ENCODE measurements at regions of chr3 and their contacts with region 1.

Region 1: DNA sequence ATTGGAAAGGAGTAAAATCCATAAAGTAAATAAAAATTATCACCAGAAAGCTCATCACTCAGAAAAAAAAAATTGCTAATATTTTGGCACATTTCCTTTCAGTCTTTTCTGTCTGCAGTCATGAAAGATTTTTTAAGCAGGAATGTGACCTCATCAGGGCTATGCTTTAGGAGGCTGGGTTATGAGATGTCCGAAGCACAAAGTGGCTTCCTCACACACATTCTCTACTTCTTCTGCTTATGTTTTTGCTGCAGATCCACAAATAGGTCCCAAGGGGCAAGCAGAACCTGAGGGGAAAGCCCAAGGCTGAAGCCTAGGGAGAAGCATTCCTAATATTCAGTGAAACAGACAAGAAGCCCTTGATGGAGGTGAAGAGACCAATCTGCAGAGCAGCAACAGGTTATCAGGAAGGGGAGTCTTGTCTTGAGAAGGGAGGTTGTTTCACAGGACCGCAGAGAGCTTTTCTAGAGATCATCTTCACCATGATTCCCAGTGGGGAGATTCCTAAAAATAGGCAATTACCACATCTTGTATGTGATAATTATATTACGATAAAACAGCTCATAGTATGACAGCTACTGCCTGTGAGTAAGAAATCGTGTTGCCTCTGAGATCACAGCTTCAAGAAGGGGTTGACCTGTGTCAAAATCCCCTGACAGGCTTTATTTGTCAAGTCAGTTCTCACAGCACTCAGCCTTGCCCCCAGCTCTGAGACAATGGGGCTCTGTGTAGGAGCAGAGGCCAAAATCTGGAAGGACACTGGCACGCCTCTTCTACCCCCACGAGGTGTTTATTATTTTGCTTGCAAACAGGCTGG is 60.5 kb downstream of the IGF2BP2 start:
- DNase-seq: no peak
- ATAC-seq: no peak
- H3K4me3 Mint-ChIP-seq: no peak overlapping the region
- H3K27ac Mint-ChIP-seq: no peak overlapping the region
- H3K4me1 Mint-ChIP-seq: no peaks in the 10 kb centered on the region
- H3K27me3 Mint-ChIP-seq: peaks cover 20% of the 10 kb centered on the region

Region 2: DNA sequence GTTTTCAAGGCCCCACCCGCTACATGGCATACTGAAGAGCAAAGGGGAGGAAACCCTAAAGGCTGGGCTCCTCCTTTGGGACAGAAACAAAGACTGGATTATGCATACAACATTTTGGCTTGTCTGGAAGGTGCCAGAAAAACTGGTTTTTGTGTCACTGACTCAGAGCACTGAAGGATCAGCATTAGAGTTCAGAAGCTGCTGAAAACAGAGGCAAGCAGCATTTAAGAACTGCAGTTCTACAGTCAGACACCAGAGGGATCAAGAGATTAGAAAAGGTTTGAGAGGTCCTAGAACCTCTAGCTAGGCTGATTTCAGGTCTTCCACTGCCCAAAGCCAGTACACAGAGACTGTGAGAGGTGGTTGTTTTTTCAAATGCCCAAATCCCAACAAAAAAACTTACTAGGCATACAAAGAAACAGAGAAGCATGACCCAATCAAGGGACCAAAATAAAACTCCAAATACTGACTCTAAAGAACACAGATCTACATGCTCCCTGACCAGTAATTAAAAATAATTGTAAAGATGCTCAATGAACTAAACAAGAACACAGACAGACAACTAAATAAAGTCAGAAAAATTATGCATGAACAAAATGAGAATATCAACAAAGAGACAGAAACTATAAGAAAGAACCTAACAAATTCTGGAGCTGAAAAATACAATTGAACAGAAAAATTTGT is 87.1 kb before region 1 on chr3:
- CTCF ChIA-PET with region 1: interaction called, 19 read pairs
- POLR2A ChIA-PET with region 1: no interaction called
- intact Hi-C with region 1: loop called (anchors 1 kb)
- DNase-seq: no peak
- ATAC-seq: no peak
- H3K4me3 Mint-ChIP-seq: no peak overlapping the region
- H3K27ac Mint-ChIP-seq: no peak overlapping the region
- H3K4me1 Mint-ChIP-seq: no peaks in the 10 kb centered on the region
- H3K27me3 Mint-ChIP-seq: peaks cover 23% of the 10 kb centered on the region

Region 3: DNA sequence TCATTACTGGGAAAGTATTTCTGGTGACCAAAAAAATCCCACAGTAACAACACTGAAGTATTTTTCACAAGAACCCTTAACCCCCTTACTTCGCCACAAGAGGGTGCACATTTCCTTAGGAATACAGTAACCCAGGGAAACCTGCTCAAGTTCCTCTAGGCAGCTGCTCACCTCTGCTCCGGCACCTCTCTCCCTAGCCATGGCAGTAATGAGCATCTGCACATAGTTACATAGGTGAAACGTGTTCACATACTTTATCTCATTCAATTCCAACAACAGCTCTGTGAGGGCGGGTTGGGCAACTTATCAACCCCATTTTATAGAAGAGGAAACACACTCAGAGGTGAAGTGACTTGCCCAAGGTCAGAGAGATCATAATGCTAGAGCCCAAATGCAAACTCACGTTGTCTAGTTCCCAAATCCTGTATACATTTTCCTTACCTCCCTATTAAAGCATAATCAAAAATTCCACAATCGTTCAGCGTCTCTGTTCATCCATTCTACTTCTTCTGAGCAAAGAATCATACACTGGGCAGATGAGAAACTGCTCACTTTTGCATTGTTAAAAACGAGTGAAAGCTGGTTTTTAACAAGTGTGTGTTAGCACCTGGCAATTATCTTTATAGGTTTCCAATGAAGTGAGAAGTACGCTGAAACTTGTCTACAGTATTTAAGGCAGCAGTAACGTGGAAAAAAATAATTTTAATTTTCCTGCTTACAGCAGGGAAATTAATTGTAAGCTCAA is 30.2 kb before region 1 on chr3:
- CTCF ChIA-PET with region 1: interaction called, 28 read pairs
- POLR2A ChIA-PET with region 1: no interaction called
- intact Hi-C with region 1: no loop called
- DNase-seq: peak; percentile 37
- ATAC-seq: no peak
- H3K4me3 Mint-ChIP-seq: no peak overlapping the region
- H3K27ac Mint-ChIP-seq: no peak overlapping the region
- H3K4me1 Mint-ChIP-seq: no peaks in the 10 kb centered on the region
- H3K27me3 Mint-ChIP-seq: peaks cover 10% of the 10 kb centered on the region

Region 4: DNA sequence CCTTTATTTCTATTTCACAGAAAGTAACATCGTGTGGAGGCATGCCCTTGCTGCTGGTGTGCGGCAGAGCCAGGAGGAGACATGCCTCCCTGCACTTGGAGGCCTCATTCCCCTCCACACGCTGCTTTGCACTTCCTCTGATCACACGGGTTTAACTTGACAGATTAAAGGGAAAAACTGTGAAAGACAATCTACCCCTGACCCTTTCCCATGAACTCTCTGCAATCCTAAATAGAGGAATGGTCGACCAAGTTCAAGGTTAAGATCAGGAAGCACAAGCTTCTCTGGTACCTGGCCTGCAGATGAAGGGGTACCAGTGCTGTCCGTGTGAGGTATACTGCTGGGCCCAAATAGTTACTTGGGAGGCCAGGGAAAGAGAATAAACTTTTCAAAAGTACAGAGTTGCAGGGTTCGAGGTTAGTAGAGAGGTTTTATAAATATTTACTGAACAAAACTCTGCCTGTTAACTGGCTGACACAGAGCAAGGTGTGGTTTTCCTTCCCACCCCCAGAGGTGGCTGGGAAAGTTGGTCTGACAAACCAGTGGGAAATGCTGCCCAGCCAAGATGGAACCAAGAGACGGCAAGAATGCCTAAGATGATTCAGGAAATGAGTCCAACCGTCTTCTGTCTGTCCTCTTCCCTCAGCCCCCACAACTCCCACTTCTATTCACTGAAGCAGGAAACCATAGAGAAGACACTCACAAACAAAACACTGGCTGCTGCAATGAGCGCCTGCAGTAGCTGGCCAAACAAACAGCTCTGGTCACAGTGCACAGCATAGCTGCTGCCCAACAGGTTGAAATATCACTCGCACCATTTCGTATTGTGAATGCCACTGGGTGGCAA is 19.2 kb before region 1 on chr3:
- CTCF ChIA-PET with region 1: interaction called, 12 read pairs
- POLR2A ChIA-PET with region 1: no interaction called
- intact Hi-C with region 1: no loop called
- DNase-seq: no peak
- ATAC-seq: no peak
- H3K4me3 Mint-ChIP-seq: no peak overlapping the region
- H3K27ac Mint-ChIP-seq: no peak overlapping the region
- H3K4me1 Mint-ChIP-seq: peaks cover 5% of the 10 kb centered on the region
- H3K27me3 Mint-ChIP-seq: peaks cover 2% of the 10 kb centered on the region

Region 5: DNA sequence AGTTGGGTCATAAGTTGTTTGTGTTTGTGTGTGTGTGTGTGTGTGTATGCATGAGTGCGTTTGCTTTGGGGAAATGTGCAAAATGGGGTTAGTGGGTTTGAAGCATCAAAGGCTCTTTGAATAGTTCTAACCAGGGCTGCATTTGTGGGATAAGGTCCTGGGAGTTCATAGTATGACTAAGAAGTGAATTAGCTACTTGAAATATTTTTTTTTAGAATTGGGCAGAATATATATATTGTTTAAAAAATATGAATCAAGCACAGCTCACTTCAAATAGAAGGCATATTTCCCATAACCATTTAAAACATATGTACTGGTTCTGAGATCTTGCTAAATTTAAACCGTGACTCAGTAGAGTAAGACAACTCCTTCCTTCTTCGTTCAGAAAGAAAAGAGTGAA is 17.4 kb after region 1 on chr3:
- CTCF ChIA-PET with region 1: interaction called, 61 read pairs
- POLR2A ChIA-PET with region 1: no interaction called
- intact Hi-C with region 1: no loop called
- DNase-seq: no peak
- ATAC-seq: no peak
- H3K4me3 Mint-ChIP-seq: no peak overlapping the region
- H3K27ac Mint-ChIP-seq: no peak overlapping the region
- H3K4me1 Mint-ChIP-seq: no peaks in the 10 kb centered on the region
- H3K27me3 Mint-ChIP-seq: peaks cover 2% of the 10 kb centered on the region